T-cell (primary cell): ENCODE measurements at regions of chr1 and their contacts with region 1.

Region 1: DNA sequence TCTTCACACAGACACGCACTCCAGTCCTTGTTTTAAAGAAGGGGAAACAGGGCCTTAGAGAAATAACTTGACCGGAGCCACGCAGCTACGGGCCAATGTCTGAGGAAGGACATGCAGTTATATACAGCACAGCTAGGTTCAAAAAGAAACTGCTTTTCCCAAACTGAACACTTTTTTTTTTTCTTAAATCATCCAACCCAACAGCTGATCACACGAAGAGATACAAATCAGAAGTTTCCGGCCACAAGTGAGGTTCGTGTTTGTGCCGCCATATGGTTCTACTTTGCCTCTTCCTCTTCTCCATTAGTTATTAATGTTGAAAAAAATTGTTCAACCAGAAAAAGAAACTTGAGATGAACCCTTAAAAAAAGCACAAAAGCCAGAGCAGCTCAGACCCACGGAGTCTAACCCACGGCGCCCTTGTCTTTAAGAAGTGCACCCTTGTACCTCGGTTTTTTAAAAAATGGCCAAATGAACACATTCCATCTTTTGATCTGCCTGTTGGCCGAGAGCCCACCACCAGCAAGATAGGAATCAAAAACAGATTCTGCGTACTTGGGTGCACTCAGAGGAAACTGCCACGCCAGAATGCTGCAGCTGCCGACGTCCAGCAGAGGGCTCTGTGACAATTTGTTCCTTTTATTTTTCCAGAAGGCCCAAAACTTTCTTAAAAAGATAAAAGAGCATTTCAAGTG is 78.9 kb downstream of the SLC66A1 start:
- DNase-seq: peak; percentile 45 to 84 (median 63)
- ATAC-seq: peak; percentile 70 to 82 (median 76)
- H3K4me3 ChIP-seq: peak overlapping the region; percentile 30 to 58
- H3K4me3 Mint-ChIP-seq: peak overlapping the region; percentile 74 to 87 (median 86)
- H3K27ac ChIP-seq: peak overlapping the region; percentile 61
- H3K27ac Mint-ChIP-seq: peak overlapping the region; percentile 88 to 98
- H3K4me1 ChIP-seq: peaks cover 25 to 79% of the 10 kb centered on the region in 2 experiments
- H3K4me1 Mint-ChIP-seq: peaks cover 79 to 90% (median 90%) of the 10 kb centered on the region in 3 donors
- H3K27me3 ChIP-seq: no peaks in the 10 kb centered on the region
- H3K27me3 Mint-ChIP-seq: no peaks in the 10 kb centered on the region

Region 2: DNA sequence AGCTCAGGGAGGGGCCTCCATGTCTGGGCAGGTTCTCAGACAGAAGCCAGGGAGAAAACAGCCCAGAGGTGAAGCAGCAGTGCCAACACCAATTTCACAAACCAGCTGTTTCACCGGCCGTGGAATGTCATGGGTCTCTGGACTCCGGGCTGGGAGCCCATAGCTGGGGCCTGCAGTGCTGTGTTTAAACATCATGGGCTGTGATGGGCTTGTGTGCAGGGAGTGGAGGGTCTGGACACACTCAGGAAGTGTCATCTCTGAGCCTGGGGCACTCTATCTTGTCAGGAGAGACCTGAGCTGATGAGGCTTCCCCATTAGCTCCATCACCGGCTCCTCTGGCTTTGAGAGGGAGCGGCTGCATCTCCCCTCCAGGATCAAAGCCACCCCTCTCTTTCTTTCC is 1457.1 kb before region 1 on chr1:
- CTCF ChIA-PET with region 1: no interaction called
- POLR2A ChIA-PET with region 1: no interaction called
- DNase-seq: no peak
- ATAC-seq: no peak
- H3K4me3 ChIP-seq: no peak overlapping the region
- H3K4me3 Mint-ChIP-seq: no peak overlapping the region
- H3K27ac ChIP-seq: no peak overlapping the region
- H3K27ac Mint-ChIP-seq: no peak overlapping the region
- H3K4me1 ChIP-seq: no peaks in the 10 kb centered on the region
- H3K4me1 Mint-ChIP-seq: no peaks in the 10 kb centered on the region
- H3K27me3 ChIP-seq: peaks cover 0 to 23% of the 10 kb centered on the region in 2 experiments
- H3K27me3 Mint-ChIP-seq: peaks cover 7 to 11% of the 10 kb centered on the region in 2 donors

Region 3: DNA sequence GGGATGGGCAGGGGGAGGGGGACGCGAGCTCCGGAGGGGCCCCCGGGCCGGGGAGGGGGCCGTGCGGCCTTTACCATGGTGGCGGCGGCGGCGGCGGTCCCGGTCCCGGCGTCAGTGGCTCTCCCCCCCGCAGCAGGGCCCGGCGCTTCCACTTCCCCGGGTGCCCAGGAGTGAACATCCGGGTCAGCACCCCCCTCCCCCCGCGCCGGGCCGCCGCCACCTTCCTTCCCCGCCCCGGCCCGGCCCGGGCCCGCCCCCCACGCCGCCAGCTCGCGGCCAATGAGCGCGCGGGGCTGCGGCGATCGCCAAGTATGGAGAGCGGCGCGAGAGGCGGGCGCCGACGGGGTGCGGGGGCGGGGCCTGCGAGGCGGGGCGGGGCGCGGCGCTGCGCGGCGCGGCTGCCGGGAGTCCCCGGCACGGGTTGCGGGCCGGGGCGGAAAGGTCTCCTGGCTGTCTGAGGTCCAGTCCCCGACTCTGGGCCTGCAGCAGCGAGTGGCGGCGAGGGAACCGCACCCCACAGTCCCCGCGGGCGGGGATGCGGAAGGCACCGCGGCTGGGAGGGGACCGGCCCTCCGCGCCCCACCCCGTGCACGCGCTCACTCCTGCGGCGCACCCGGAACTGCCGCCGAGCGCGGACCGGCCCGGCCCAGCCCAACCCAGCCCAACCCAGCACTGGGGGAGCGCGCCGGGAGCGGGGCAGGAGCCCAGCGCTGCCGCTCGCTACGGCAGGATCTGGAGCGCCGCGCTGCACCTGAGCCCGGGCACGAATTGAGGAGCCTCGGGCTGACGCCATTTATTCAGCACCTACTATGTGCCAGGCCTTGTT is 94.5 kb after region 1 on chr1 and contains the start of gene CAPZB:
- CTCF ChIA-PET with region 1: interaction called in 1 of 2 experiments, 12 read pairs
- POLR2A ChIA-PET with region 1: interaction called in 1 of 2 experiments, 3 read pairs
- DNase-seq: peak; percentile 87 to 97 (median 93)
- ATAC-seq: peak; percentile 88 to 92 (median 88)
- H3K4me3 ChIP-seq: peak within 1 kb of the TSS; percentile 85 to 96
- H3K4me3 Mint-ChIP-seq: peak within 1 kb of the TSS; percentile 91 to 92 (median 92)
- H3K27ac ChIP-seq: peak within 1 kb of the TSS; percentile 89
- H3K27ac Mint-ChIP-seq: peak within 1 kb of the TSS; percentile 96
- H3K4me1 ChIP-seq: peaks cover 38 to 67% of the 10 kb centered on the region in 2 experiments
- H3K4me1 Mint-ChIP-seq: peaks cover 59 to 71% (median 64%) of the 10 kb centered on the region in 3 donors
- H3K27me3 ChIP-seq: no peaks in the 10 kb centered on the region
- H3K27me3 Mint-ChIP-seq: no peaks in the 10 kb centered on the region
- total RNA-seq, gene CAPZB: 272 to 342 (median 320) TPM

Region 4: GRCh38 chr1:19750101-19750881 is 359.2 kb after region 1 on chr1:
- CTCF ChIA-PET with region 1: no interaction called
- POLR2A ChIA-PET with region 1: no interaction called
- DNase-seq: no peak
- ATAC-seq: no peak
- H3K4me3 ChIP-seq: no peak overlapping the region
- H3K4me3 Mint-ChIP-seq: no peak overlapping the region
- H3K27ac ChIP-seq: no peak overlapping the region
- H3K27ac Mint-ChIP-seq: no peak overlapping the region
- H3K4me1 ChIP-seq: no peaks in the 10 kb centered on the region
- H3K4me1 Mint-ChIP-seq: no peaks in the 10 kb centered on the region
- H3K27me3 ChIP-seq: no peaks in the 10 kb centered on the region
- H3K27me3 Mint-ChIP-seq: no peaks in the 10 kb centered on the region